ENCODE measurements at regions of chr3 and their contacts with region 1.

Region 1: DNA sequence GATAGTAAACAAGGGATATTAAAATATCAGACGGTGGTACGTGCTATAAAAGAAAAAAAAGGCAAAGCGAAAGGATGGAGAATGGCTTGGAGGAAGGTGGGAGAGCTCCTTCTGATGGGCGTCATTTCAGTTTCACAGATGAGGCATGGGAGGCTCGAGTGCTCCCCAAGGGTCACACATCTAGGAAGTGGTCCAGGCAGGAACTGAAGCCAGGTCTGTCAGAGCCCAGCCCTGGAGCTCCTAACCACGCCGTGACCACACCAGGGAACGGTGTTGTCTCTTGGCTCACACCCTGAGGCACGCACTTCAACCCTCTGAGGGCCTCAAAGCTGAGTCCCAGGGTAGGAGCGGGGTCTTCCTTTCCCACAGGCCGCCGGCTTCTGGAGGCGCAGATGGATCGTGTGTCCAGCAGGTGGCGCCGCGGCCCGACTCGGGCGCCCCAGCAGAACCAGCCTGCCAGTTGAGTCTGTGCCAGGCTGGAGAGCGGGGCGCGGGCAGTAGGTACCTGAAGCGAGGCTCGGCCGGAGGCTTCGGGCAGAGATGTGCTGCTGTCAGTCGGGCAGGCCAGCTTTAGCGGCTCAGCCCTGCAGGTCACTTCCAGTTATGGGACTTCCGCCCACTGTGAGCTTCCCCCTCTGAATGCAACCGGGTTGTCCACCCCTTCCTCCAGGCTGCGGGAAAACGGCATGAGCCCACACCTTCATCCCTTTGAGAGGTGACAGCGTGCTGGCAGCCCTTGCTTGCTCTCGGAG is 68.1 kb downstream of the SLC6A1 start:
- H3K4me3 Mint-ChIP-seq: peak overlapping the region; percentile 33
- H3K27ac Mint-ChIP-seq: no peak overlapping the region
- H3K4me1 Mint-ChIP-seq: no peaks in the 10 kb centered on the region
- H3K27me3 Mint-ChIP-seq: peaks cover 22% of the 10 kb centered on the region

Region 2: GRCh38 chr3:10758304-10759061 is 302.2 kb before region 1 on chr3:
- intact Hi-C with region 1: loop called (anchors 1 kb)
- H3K4me3 Mint-ChIP-seq: no peak overlapping the region
- H3K27ac Mint-ChIP-seq: no peak overlapping the region
- H3K4me1 Mint-ChIP-seq: no peaks in the 10 kb centered on the region
- H3K27me3 Mint-ChIP-seq: peaks cover 23% of the 10 kb centered on the region

Region 3: DNA sequence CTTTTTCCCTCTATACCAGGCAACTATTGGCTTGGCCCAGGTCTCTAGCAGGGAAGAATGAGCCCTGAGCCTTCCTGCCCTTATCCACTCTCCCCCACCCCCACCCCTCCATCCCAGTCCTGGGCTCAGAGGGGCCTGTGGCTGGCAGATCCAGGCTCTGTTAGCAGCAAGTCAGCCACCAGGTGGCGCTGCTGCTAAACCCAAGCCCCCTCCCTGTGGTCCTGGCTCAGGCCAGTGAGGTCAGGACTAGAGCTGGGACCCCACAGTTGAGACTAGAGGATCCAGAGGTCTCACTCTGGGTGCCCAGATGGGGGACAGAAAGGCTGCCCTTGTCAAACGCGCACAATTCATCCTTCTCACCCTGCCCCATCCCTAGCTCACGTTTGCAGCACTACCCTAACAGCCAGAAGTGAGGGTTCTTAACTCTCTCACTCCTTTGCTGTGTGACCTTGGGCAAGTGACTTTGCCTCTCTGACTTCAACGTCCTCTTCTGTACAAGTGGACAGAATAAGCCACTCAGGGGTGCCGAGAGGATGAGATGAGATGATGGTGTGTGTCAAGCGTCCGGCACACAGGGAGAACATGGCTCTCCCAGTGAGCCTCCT is 114.9 kb before region 1 on chr3:
- intact Hi-C with region 1: loop called (anchors 1 kb)
- H3K4me3 Mint-ChIP-seq: no peak overlapping the region
- H3K27ac Mint-ChIP-seq: no peak overlapping the region
- H3K4me1 Mint-ChIP-seq: no peaks in the 10 kb centered on the region
- H3K27me3 Mint-ChIP-seq: peaks cover 23% of the 10 kb centered on the region

Region 4: GRCh38 chr3:11155341-11156025 is 94.8 kb after region 1 on chr3:
- intact Hi-C with region 1: loop called (anchors 5 kb)
- H3K4me3 Mint-ChIP-seq: peak overlapping the region; percentile 99
- H3K27ac Mint-ChIP-seq: peak overlapping the region; percentile 82
- H3K4me1 Mint-ChIP-seq: peaks cover 75% of the 10 kb centered on the region
- H3K27me3 Mint-ChIP-seq: peaks cover 8% of the 10 kb centered on the region

Region 5: DNA sequence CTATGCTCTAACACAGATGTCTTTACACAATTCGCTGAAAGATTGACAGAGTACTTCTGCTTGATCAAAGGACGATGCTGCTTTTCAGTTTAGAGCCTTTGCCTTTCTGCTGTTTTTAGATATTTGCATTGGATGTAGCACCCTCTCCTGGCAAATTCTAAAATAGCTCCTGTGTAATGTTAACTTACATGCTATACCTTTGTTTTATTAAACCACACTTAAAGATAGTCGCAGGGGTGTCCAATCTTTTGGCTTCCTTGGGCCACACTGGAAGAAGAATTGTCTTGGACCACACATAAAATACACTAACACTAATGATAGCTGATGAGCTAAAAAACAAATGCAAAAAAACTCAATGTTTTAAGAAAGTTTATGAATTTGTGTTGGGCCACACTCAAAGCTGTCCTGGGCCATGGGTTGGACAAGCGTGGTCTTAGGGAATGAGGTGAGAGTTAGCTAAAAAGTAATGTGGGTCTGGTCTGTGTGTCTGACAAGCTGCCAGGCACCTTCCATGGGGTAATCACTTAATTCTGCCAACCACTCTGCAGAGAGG is 274.5 kb after region 1 on chr3:
- intact Hi-C with region 1: loop called (anchors 2 kb)
- H3K4me3 Mint-ChIP-seq: no peak overlapping the region
- H3K27ac Mint-ChIP-seq: no peak overlapping the region
- H3K4me1 Mint-ChIP-seq: peaks cover 12% of the 10 kb centered on the region
- H3K27me3 Mint-ChIP-seq: no peaks in the 10 kb centered on the region

Region 6: GRCh38 chr3:11651900-11652299 is 591.2 kb after region 1 on chr3:
- intact Hi-C with region 1: loop called (anchors 5 kb)
- H3K4me3 Mint-ChIP-seq: no peak overlapping the region
- H3K27ac Mint-ChIP-seq: no peak overlapping the region
- H3K4me1 Mint-ChIP-seq: no peaks in the 10 kb centered on the region
- H3K27me3 Mint-ChIP-seq: peaks cover 3% of the 10 kb centered on the region

Measured in dendritic cell treated with granulocyte-macrophage colony-stimulating factor and Interleukin-4, amounts not matched to agents 40 ng/mL and 50 ng/mL, for 4 days (primary cell).